Ascending aorta (tissue), 2 donors: ENCODE measurements at regions of chr20 and their contacts with region 1.

Region 1: DNA sequence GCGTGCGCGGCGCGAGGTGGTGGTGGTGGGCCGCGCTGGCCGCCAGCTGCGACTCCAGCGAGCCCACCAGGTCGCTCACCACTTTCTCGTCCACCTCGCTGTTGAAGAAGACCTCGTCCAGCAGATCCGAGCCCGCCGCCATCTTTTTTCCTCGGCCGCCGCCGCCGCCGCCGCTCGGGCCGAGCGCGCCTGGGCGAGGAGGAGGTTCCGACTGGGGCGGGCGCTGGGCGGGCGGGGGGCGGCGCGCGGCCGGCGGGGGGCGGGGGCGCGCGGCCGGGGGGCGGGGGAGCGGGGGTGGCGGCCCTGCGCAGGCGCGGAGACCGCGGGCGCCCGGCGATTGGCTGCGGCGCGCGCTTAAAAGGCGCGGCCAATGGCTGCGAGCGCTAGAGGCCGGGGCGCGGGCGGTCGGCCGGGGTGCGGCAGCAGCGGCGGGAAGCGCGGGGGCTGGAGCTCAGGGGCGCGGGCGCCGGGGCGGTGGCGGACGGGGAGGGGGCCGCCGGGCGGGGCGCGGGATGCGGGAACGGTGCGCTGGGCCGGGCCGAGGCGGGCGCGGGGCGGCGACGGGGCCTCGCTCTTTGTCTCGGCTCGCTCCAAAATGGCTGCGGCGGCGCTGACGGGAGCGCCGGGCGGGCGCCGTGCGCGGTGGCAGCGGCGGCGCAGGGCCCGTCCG is at the start of gene TAF4:
- DNase-seq: peak in 1 of 2 donors; percentile 85
- H3K4me3 ChIP-seq: peak within 1 kb of the TSS; percentile 81 to 86
- H3K27ac ChIP-seq: peak within 1 kb of the TSS; percentile 89 to 93
- H3K4me1 ChIP-seq: peaks cover 4 to 20% of the 10 kb centered on the region in 2 donors
- H3K27me3 ChIP-seq: no peaks in the 10 kb centered on the region
- CTCF ChIP-seq: no peak
- total RNA-seq, gene TAF4: 166 TPM

Region 2: GRCh38 chr20:61311656-61312370 is 754.0 kb before region 1 on chr20:
- intact Hi-C with region 1: no loop called
- DNase-seq: no peak
- H3K4me3 ChIP-seq: no peak overlapping the region
- H3K27ac ChIP-seq: no peak overlapping the region
- H3K4me1 ChIP-seq: no peaks in the 10 kb centered on the region
- H3K27me3 ChIP-seq: no peaks in the 10 kb centered on the region
- CTCF ChIP-seq: no peak

Region 3: DNA sequence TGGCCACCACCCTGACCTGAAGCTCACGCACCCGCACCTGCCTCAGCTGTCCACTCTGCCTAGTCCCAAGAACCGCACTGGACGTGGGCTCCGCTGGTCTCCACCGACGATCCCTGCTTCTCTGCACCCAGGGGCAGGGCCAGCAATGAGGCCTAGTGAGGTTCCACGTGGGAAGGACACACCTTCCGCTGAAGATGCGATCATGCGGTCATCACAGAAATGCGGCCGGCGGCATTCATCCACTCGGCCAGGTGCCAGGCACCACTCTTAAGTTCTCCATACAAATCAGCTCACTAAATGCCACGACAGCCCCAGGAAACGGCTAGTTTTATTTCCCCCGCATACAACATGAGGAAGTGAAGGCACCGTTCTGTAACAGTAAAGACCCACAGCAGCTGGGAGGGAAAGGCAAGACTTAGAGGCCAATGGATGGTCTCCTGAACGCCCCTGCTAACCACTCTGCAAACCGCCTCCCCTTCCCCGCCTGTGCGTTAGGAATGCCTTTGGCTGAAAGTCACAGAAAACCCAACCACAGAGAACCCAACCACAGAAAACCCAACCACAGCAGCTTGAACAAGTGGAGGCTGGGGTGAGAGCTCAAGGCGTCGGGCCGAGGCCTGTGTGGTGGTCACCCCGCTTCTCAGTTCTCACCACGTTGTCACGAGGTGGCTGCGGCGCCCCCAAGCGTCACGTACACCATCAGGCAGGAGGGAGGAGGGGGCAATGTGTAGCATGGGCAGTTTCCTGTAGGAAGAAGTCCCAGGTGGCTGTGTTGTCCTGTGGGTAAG is 204.6 kb before region 1 on chr20:
- intact Hi-C with region 1: no loop called
- DNase-seq: no peak
- H3K4me3 ChIP-seq: no peak overlapping the region
- H3K27ac ChIP-seq: no peak overlapping the region
- H3K4me1 ChIP-seq: no peaks in the 10 kb centered on the region
- H3K27me3 ChIP-seq: no peaks in the 10 kb centered on the region
- CTCF ChIP-seq: no peak

Region 4: GRCh38 chr20:62010551-62011402 is 55.0 kb before region 1 on chr20:
- intact Hi-C with region 1: loop called (anchors 5 kb)
- DNase-seq: no peak
- H3K4me3 ChIP-seq: no peak overlapping the region
- H3K27ac ChIP-seq: no peak overlapping the region
- H3K4me1 ChIP-seq: no peaks in the 10 kb centered on the region
- H3K27me3 ChIP-seq: no peaks in the 10 kb centered on the region
- CTCF ChIP-seq: peak; percentile 40 to 77 (median 72)

Region 5: GRCh38 chr20:62020935-62021701 is 44.7 kb before region 1 on chr20:
- intact Hi-C with region 1: no loop called
- DNase-seq: peak in 1 of 2 donors; percentile 66
- H3K4me3 ChIP-seq: no peak overlapping the region
- H3K27ac ChIP-seq: no peak overlapping the region
- H3K4me1 ChIP-seq: peaks cover 0 to 17% of the 10 kb centered on the region in 2 donors
- H3K27me3 ChIP-seq: no peaks in the 10 kb centered on the region
- CTCF ChIP-seq: no peak

Region 6: DNA sequence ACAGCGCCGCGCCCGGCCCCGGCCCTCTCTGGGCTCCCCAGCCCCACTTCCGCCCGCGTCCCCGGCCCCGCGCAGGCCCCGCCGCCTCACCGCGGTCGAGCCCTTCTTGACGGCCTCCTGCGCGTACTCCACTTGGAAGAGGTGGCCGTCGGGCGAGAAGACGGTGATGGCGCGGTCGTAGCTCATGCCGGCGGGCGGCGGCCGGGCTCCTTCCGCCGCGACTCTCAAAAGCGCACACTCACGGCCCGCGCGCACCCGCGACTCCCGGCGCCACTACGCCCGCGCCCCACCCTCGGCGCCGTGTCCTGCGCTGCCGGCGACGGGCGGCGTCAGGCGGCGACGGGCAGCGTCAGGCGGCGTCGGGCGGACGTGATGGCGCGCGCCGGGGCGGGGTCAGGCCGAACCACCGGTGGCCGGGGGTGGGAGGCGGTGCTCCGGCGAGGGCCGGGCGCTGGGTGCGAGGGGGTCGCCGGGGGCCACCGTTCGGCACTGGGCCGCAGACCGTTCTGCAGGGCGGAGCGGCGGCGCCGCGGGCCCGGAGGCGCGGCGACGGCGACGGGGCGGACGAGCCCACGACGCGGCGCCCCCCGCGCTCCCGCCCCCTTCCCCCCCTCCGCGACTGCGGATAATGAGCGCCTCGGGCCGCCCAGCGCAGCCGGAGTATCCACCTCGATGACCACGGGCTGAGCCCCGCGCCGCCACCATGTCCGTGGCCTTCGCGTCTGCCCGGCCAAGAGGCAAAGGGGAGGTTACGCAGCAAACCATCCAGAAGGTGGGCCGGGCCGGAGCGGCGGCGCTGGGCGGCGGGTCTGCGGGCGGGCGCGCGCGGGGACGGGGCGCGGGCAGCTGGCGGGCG is 77.5 kb after region 1 on chr20 and contains the starts of genes PSMA7 and SS18L1:
- intact Hi-C with region 1: loop called (anchors 1 kb)
- DNase-seq: peak in 1 of 2 donors; percentile 91
- H3K4me3 ChIP-seq: peak within 1 kb of the TSS; percentile 91 to 99
- H3K27ac ChIP-seq: peak within 1 kb of the TSS; percentile 92 to 97
- H3K4me1 ChIP-seq: peaks cover 9 to 31% of the 10 kb centered on the region in 2 donors
- H3K27me3 ChIP-seq: no peaks in the 10 kb centered on the region
- CTCF ChIP-seq: peak in 1 of 3 experiments; percentile 6
- total RNA-seq, gene PSMA7: 301 TPM
- total RNA-seq, gene SS18L1: 39.8 TPM

Region 7: GRCh38 chr20:62237801-62238571 is 172.2 kb after region 1 on chr20 and contains the start of gene OSBPL2:
- intact Hi-C with region 1: loop called (anchors 10 kb)
- DNase-seq: peak; percentile 97 to 99
- H3K4me3 ChIP-seq: peak within 1 kb of the TSS; percentile 86 to 96
- H3K27ac ChIP-seq: peak within 1 kb of the TSS; percentile 88 to 95
- H3K4me1 ChIP-seq: peaks cover 2 to 7% of the 10 kb centered on the region in 2 donors
- H3K27me3 ChIP-seq: no peaks in the 10 kb centered on the region
- CTCF ChIP-seq: no peak
- total RNA-seq, gene OSBPL2: 25.0 TPM

Region 8: DNA sequence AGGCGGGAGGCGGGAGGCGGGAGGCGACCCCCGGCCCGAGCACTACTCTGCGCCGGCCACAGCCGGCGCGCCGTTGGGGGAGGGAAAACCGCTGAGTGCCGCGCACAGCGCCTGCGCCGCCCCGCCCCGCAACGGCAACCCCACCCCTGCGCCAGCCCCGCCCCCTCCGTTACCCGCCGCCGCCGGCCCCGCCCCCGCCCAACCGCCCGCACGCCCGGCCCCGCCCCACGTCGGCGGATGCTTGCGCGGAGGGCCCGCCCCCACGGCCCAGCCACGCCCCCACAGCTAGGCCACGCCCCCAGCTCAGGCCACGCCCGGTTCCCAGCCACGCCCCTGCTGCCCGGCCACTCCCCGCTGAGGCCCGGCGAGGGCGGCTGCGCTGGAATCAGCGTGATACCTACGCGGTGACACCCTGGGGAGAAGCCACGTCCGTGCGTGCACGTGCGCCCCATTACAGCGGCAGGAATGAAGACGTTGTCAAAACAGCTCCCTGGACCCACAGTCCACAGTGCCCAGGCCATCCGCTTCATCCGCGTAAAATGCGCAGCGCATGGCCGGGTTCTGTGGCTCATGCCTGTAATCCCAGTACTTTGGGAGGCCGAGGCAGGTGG is 796.0 kb after region 1 on chr20 and contains the start of gene TCFL5:
- intact Hi-C with region 1: loop called (anchors 5 kb)
- DNase-seq: peak; percentile 53 to 93
- H3K4me3 ChIP-seq: peak within 1 kb of the TSS; percentile 57 to 69
- H3K27ac ChIP-seq: peak within 1 kb of the TSS; percentile 56 to 63
- H3K4me1 ChIP-seq: peaks cover 4 to 7% of the 10 kb centered on the region in 2 donors
- H3K27me3 ChIP-seq: no peaks in the 10 kb centered on the region
- CTCF ChIP-seq: no peak
- total RNA-seq, gene TCFL5: 1.1 TPM